Activated B cell treated with CpG ODN at 0.5 μM for 24 hours (primary cell): ENCODE measurements at regions of chr17 and their contacts with region 1.

Region 1: DNA sequence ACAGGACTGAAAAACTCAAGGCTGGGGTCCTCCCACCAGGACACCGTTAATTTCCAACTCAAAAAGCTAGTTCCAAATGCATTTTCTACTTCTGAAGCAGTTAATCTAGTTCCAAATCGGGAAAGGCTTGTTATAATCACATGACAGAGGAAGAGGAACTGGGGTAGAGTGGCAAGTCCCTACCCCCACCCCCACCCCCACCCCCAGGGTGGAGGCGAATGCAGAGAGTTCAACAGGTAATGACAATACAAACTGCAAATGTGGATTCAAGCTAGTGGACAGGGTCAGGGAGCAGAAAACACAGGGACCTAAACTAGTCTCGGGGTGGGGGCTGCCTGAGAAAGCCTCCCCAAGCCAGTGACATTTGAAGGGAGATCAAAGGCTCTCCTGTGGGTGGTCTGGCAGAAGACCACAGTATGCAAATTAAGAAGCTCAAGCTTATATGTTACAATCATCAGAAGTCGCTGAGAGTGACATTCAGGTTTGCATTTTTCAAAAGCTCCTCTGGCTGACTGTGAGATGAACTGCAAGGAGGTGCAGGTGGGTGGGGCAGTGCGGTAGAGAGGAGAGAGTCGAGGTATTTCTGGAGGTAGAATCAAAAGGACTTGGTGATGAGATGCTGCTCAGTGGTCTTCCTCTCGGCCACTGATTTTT is 56.4 kb upstream of the SLC25A19 start:
- DNase-seq: peak; percentile 63
- ATAC-seq: peak; percentile 83
- H3K4me3 Mint-ChIP-seq: peak overlapping the region; percentile 89
- H3K27ac Mint-ChIP-seq: peak overlapping the region; percentile 92
- H3K4me1 Mint-ChIP-seq: peaks cover 97% of the 10 kb centered on the region
- H3K27me3 Mint-ChIP-seq: no peaks in the 10 kb centered on the region
- CTCF ChIP-seq: no peak

Region 2: DNA sequence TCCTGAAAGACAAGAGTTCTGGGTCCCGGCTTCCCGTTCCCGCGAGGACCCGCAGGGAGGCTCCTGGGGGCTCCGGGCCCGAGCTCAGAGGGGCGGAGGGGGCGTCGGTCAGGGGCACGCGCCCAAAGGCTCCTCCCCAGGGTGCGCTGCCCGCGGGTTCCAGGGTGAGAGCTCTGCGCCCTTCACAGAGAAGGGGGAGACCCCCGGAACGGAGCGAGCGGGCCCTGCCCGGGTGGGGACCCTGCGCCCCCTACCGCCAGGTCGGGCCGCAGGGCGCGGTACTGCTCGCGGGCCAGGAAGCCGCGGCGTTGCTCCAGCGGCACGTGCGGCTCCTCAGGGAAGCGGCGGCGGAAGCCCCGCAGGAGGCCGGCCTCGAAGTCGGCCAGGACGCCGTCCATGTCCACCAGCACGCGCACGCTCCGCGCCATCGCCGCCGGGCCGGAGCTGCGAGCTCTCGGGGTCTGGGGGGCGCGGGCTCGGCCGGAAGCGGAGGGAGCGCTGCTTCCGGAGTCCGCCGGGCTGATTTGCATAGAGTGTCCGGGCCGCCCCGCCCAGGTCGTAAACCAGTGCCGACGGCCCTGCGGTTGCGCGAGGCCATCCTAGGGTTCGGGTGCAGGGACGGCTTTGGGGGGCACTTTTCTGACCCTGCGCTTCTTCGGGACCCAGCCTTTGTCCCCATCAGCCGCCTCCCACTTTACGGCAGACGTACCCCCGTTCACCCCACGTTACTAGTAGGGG is 214.2 kb before region 1 on chr17 and contains the start of gene NT5C:
- CTCF ChIA-PET with region 1: no interaction called
- POLR2A ChIA-PET with region 1: no interaction called
- intact Hi-C with region 1: no loop called
- DNase-seq: peak; percentile 83
- ATAC-seq: peak; percentile 83
- H3K4me3 Mint-ChIP-seq: peak within 1 kb of the TSS; percentile 88
- H3K27ac Mint-ChIP-seq: peak within 1 kb of the TSS; percentile 92
- H3K4me1 Mint-ChIP-seq: peaks cover 28% of the 10 kb centered on the region
- H3K27me3 Mint-ChIP-seq: no peaks in the 10 kb centered on the region
- CTCF ChIP-seq: no peak
- total RNA-seq, gene NT5C: 95.0 and 98.2 TPM in 2 replicates

Region 3: DNA sequence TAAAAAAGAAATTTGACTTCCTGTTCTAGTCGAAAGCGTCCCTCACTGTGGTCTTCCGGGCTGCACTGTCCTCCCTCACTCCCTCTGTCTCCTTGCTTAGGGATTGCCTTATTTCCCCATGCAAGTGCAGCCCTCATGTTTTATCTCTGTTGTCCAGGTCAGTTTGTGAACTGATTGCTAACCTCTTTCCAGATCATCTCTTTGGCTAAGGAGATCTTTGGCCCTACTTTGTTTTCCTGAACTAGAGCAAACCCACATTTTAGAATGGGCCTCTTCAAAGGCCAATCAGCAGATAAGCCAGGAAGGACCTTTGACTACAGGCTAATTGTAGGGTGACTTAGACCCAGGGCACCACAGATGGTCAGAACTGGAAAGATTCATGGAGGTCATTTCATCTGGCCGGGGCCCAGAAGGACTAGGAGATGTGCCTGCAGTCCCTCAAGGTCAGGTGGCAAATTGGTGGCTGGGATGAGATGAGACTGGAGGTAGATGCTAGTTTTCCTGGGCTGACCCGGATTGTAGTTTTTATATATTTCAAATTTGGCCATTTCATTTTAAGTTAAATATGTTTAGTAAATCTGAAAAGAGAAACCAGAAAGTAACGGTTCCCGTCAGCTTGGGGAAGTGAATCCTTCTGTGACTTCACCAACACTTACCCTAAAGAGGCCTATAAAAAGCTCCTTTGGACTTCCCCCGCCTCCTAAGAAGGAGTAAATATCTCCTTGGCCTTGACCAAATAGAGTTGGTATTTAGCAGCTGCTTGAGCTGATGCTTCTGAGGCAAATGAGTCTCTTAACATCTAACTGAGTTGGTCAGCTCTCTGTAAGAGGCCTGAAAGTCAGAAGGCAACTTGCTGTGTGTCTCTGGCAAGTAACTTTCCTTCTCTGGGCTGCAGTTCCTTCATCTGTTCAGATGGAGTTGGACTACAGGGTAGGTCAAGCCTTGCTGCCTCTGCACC is 50.2 kb before region 1 on chr17:
- CTCF ChIA-PET with region 1: interaction called, 7 read pairs
- POLR2A ChIA-PET with region 1: interaction called, 154 read pairs
- intact Hi-C with region 1: loop called (anchors 1 kb)
- DNase-seq: peak; percentile 46
- ATAC-seq: peak; percentile 64
- H3K4me3 Mint-ChIP-seq: peak overlapping the region; percentile 76
- H3K27ac Mint-ChIP-seq: peak overlapping the region; percentile 100
- H3K4me1 Mint-ChIP-seq: peaks cover 77% of the 10 kb centered on the region
- H3K27me3 Mint-ChIP-seq: no peaks in the 10 kb centered on the region
- CTCF ChIP-seq: no peak

Region 4: DNA sequence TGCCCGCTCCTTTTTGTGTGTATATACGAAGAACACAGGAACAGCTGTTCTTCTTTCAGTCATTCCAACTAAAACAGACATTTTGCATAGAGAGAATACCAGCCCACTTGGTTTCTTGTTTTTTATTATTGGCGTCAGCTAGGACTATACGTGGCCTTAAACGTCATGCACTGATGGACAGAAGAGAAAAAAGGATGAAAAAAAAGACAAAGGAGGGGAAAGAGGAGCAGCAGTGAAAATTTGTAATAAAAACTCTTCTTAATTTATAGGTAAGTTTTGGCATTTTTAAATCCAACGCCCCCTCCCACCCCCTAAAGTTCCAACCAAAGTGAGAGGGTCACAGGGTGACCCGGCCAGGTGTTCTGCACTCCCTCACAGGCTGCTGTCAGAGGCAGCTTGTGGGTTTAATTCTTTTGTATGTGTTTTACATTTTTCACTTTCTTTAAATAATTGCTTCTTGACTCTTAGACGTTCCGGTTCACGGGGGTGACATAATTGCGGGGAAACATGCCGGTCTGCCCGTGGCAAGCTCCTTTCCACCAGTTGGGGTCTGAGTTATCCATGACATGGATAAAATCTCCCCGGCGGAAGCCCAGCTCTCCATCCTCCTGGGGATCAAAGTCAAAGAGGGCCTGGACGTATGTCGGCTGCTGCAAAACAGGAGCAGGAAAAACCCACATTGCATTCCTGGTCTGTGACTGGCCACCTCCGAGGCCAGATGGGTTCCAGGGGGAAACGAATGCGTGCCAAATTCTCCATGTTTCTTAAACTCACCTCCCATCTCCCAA is 25.5 kb before region 1 on chr17:
- CTCF ChIA-PET with region 1: interaction called, 20 read pairs
- POLR2A ChIA-PET with region 1: interaction called, 96 read pairs
- intact Hi-C with region 1: loop called (anchors 1 kb)
- DNase-seq: no peak
- ATAC-seq: peak; percentile 53
- H3K4me3 Mint-ChIP-seq: peak overlapping the region; percentile 70
- H3K27ac Mint-ChIP-seq: peak overlapping the region; percentile 93
- H3K4me1 Mint-ChIP-seq: peaks cover 87% of the 10 kb centered on the region
- H3K27me3 Mint-ChIP-seq: no peaks in the 10 kb centered on the region
- CTCF ChIP-seq: no peak

Region 5: GRCh38 chr17:75364078-75364477 is 18.4 kb after region 1 on chr17:
- CTCF ChIA-PET with region 1: interaction called, 7 read pairs
- POLR2A ChIA-PET with region 1: interaction called, 10 read pairs
- intact Hi-C with region 1: loop called (anchors 2 kb)
- DNase-seq: no peak
- ATAC-seq: no peak
- H3K4me3 Mint-ChIP-seq: peak overlapping the region; percentile 33
- H3K27ac Mint-ChIP-seq: peak overlapping the region; percentile 50
- H3K4me1 Mint-ChIP-seq: peaks cover 96% of the 10 kb centered on the region
- H3K27me3 Mint-ChIP-seq: no peaks in the 10 kb centered on the region
- CTCF ChIP-seq: no peak

Region 6: GRCh38 chr17:75380315-75380714 is 34.7 kb after region 1 on chr17:
- CTCF ChIA-PET with region 1: interaction called, 5 read pairs
- POLR2A ChIA-PET with region 1: interaction called, 10 read pairs
- intact Hi-C with region 1: no loop called
- DNase-seq: no peak
- ATAC-seq: no peak
- H3K4me3 Mint-ChIP-seq: no peak overlapping the region
- H3K27ac Mint-ChIP-seq: no peak overlapping the region
- H3K4me1 Mint-ChIP-seq: peaks cover 84% of the 10 kb centered on the region
- H3K27me3 Mint-ChIP-seq: no peaks in the 10 kb centered on the region
- CTCF ChIP-seq: no peak